HCT116 (cell line): ENCODE measurements at regions of chr16 and their contacts with region 1.

Region 1: GRCh38 chr16:10181196-10182162 is 749 bp downstream of the GRIN2A start:
- DNase-seq: peak; percentile 21
- ATAC-seq: peak; percentile 93
- H3K4me3 ChIP-seq: no peak overlapping the region
- H3K27ac ChIP-seq: no peak overlapping the region
- H3K4me1 ChIP-seq: peaks cover 0 to 4% of the 10 kb centered on the region in 2 experiments; a peak in 1 of 4 replicates
- H3K27me3 ChIP-seq: no peaks in the 10 kb centered on the region
- CTCF ChIP-seq: peak; percentile 52 to 93 (median 77); a peak in 5 of 6 replicates
- POLR2A ChIP-seq: no peak
- RAD21 ChIP-seq: peak; percentile 90

Region 2: DNA sequence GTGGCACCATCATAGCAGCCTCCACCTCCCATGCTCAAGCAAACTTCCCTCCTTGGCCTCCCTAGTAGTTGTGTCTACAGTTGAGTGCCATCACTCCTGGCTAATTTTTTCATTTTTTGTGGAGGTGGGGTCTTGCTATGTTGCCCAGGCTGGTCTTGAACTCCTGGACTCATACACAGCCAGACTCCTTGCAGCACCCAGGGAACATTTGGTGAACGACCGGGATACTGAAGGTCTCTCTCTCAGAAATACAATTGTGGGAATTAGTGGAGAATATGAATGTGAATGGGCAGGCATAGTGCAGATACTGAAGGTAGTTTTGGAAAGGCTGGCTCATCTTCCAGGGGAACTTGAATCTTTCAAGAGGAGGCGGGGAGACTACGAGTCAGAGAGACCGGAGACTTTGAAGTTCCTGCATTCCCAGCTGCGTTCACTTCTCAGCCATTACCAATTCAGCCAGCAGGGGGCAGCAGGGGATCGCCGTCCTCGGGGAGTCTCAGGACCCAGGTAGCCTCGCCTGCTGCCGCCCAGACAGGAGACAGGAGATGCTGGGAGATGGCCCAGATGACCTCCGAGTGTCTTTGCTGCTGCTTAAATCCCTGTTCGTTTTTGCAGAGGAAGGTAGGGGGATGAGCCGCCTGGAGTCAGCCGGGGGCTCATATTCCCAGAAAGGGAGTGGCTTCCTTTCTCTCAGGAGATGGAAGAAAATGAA is 1021.5 kb before region 1 on chr16:
- CTCF ChIA-PET with region 1: no interaction called
- POLR2A ChIA-PET with region 1: no interaction called
- RAD21 ChIA-PET with region 1: no interaction called
- intact Hi-C with region 1: loop called (anchors 1 kb)
- DNase-seq: peak; percentile 75
- ATAC-seq: peak; percentile 98
- H3K4me3 ChIP-seq: no peak overlapping the region
- H3K27ac ChIP-seq: no peak overlapping the region
- H3K4me1 ChIP-seq: peaks cover 0 to 12% of the 10 kb centered on the region in 2 experiments; a peak in 1 of 4 replicates
- H3K27me3 ChIP-seq: no peaks in the 10 kb centered on the region
- CTCF ChIP-seq: peak; percentile 69 to 88 (median 86)
- POLR2A ChIP-seq: no peak
- RAD21 ChIP-seq: peak; percentile 91

Region 3: GRCh38 chr16:9647981-9648712 is 533.3 kb before region 1 on chr16:
- CTCF ChIA-PET with region 1: interaction called, 6 read pairs
- POLR2A ChIA-PET with region 1: no interaction called
- RAD21 ChIA-PET with region 1: no interaction called
- intact Hi-C with region 1: loop called (anchors 2 kb)
- DNase-seq: no peak
- ATAC-seq: peak; percentile 72
- H3K4me3 ChIP-seq: no peak overlapping the region
- H3K27ac ChIP-seq: no peak overlapping the region
- H3K4me1 ChIP-seq: no peaks in the 10 kb centered on the region
- H3K27me3 ChIP-seq: 0 out of 2 replicates have a peak, but pooled peaks cover 8% of the 10 kb centered on the region
- CTCF ChIP-seq: peak; percentile 35 to 79 (median 73); a peak in 5 of 6 replicates
- POLR2A ChIP-seq: no peak
- RAD21 ChIP-seq: peak; percentile 61

Region 4: DNA sequence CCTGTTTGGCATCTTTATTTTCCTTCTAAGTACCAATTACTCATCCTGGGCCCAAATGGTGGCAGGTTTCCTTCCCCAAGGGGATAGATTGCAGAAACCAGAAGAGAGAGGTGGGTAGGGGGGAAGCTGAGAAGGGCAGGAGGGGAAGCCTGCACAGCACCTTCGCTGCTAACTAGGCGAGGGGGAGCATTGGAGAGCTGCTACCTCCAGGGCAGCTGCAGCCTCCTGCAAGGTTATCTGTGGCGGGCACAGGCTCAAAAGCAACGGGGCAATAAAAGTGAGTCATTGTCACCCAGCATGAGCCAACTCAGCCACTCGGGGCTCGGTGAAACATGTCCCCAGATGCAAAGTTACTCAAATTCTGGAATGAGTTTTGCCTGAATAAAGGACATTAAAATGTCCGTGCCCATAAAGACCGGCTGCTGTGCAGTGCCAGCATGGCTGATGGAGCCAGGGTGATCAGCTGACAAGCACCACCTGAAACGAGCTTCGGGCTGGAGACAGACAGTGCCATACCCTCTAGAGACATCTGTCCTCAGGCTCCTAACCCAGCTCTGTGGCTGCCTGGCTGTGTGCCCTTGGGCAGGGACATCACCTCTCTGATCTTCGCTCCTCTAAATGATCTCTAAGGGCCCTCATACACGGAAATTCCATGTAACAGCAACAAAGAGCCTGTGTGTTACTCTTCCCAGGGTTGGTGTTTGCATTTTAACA is 68.8 kb after region 1 on chr16:
- CTCF ChIA-PET with region 1: no interaction called
- POLR2A ChIA-PET with region 1: no interaction called
- RAD21 ChIA-PET with region 1: no interaction called
- intact Hi-C with region 1: no loop called
- DNase-seq: peak; percentile 7
- ATAC-seq: peak; percentile 91
- H3K4me3 ChIP-seq: peak overlapping the region in 1 of 2 experiments; percentile 11; a peak in 1 of 4 replicates
- H3K27ac ChIP-seq: no peak overlapping the region
- H3K4me1 ChIP-seq: peaks cover 6 to 13% of the 10 kb centered on the region in 2 experiments; a peak in 2 of 4 replicates
- H3K27me3 ChIP-seq: no peaks in the 10 kb centered on the region
- CTCF ChIP-seq: no peak
- POLR2A ChIP-seq: no peak
- RAD21 ChIP-seq: no peak